ENCODE measurements at regions of chr15 and their contacts with region 1.

Region 1: DNA sequence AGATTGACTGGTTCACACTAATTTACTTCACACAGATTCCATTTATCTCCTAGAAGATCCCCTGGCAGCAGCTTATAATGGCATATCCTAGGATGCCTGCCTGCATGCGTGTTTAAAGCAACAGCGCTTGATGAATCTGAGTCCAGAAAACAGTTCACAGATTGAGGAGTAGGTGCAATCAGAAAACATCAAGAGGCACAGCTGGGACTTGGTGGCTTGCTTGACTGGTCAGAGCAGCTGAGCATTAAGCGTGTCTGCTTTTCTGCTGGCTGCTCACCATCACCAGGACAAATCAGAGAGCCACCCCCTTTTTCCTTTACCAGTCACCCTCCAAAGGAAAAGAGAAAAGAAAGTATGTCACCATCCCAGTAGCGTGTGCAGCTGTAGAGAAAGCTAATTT is 223.6 kb downstream of the WDR72 start:
- DNase-seq: no peak
- H3K4me3 ChIP-seq: no peak overlapping the region
- H3K27ac ChIP-seq: no peak overlapping the region
- H3K4me1 ChIP-seq: no peaks in the 10 kb centered on the region
- H3K27me3 ChIP-seq: no peaks in the 10 kb centered on the region
- CTCF ChIP-seq: no peak

Region 2: GRCh38 chr15:53512030-53512429 is 23.9 kb before region 1 on chr15:
- CTCF ChIA-PET with region 1: no interaction called
- dilution Hi-C with region 1: no loop called
- in situ Hi-C with region 1: no loop called
- intact Hi-C with region 1: no loop called
- DNase-seq: no peak
- H3K4me3 ChIP-seq: no peak overlapping the region
- H3K27ac ChIP-seq: no peak overlapping the region
- H3K4me1 ChIP-seq: no peaks in the 10 kb centered on the region
- H3K27me3 ChIP-seq: no peaks in the 10 kb centered on the region
- CTCF ChIP-seq: no peak

Region 3: GRCh38 chr15:53576841-53577240 is 41.0 kb after region 1 on chr15:
- CTCF ChIA-PET with region 1: no interaction called
- dilution Hi-C with region 1: no loop called
- in situ Hi-C with region 1: no loop called
- intact Hi-C with region 1: loop called (anchors 2 kb)
- DNase-seq: peak; percentile 8
- H3K4me3 ChIP-seq: no peak overlapping the region
- H3K27ac ChIP-seq: no peak overlapping the region
- H3K4me1 ChIP-seq: peaks cover 14% of the 10 kb centered on the region
- H3K27me3 ChIP-seq: no peaks in the 10 kb centered on the region
- CTCF ChIP-seq: no peak

Measured in mammary epithelial cell (primary cell).